Left cardiac atrium (tissue), 4 donors: ENCODE measurements at regions of chr6 and their contacts with region 1.

Region 1: GRCh38 chr6:42745707-42746462 is at the start of gene TBCC:
- DNase-seq: peak; percentile 95
- ATAC-seq: peak; percentile 89 to 91
- total RNA-seq, gene TBCC: 12.2 to 13.0 TPM

Region 2: DNA sequence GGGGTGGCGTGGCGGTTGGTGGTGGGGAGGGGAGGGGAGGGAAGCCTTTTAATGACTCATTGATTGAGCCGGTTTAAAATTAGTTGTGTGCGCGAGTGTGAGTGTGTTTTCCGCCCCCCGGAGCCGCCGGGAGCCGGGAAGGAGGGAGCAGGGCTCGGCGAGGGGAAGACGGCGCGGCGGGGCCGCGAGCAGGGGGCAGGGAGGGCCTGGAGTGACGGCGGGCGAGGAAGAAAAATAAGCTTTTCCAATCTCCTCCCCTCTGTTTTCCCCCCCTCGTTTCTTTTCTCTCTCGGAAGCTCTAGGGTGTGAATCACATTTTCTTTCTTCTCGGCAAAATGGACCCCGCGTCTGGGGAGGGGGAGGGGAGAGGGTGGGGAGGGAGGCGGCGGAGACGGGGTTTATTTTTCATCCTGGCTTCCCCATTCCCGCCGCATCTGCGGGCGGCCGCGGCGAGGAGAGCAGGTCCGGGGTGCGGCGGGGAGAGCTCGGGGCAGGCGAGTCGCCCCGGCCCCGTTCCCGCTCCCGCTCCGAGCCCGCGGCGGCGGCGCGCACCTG is 36.8 kb after region 1 on chr6:
- intact Hi-C with region 1: loop called (anchors 1 to 2 kb)
- DNase-seq: peak; percentile 84
- ATAC-seq: peak; percentile 72 to 85

Region 3: GRCh38 chr6:42879372-42880239 is 133.7 kb after region 1 on chr6 and contains the start of gene RPL7L1:
- intact Hi-C with region 1: loop called in 1 of 2 experiments (anchors 5 kb)
- DNase-seq: peak; percentile 81
- ATAC-seq: peak; percentile 97 to 98
- total RNA-seq, gene RPL7L1: 50.8 to 60.8 TPM